ENCODE measurements at regions of chr21 and their contacts with region 1.

Region 1: DNA sequence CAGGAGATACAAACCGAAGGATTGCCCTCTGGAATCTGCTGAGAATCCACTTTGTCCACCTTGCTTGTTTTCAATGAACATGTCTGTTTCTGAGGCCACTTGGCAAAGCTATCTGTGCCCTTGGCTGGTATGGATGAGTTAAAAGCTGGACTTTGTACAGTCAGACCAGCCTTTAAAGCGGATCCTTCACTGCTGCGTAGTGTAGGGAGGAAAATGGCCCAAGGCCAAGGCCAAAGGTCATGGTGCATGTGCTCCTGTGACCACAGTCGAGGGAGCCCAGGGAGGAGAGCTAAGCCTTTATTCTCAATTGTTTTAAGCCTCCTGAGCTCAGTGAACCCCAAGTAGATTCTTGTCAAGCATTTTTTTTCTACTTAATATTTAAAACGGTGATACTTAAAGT is 37.0 kb downstream of the KCNJ15 start:
- DNase-seq: no peak
- ATAC-seq: no peak
- H3K4me3 ChIP-seq: no peak overlapping the region
- H3K4me3 Mint-ChIP-seq: no peak overlapping the region
- H3K27ac ChIP-seq: no peak overlapping the region
- H3K27ac Mint-ChIP-seq: no peak overlapping the region
- H3K4me1 ChIP-seq: peaks cover 6% of the 10 kb centered on the region
- H3K4me1 Mint-ChIP-seq: peaks cover 0 to 5% of the 10 kb centered on the region in 2 donors
- H3K27me3 ChIP-seq: no peaks in the 10 kb centered on the region
- H3K27me3 Mint-ChIP-seq: peaks cover 9 to 43% of the 10 kb centered on the region in 2 donors
- CTCF ChIP-seq: no peak

Region 2: GRCh38 chr21:38140210-38140907 is 153.4 kb before region 1 on chr21:
- intact Hi-C with region 1: no loop called
- DNase-seq: no peak
- ATAC-seq: no peak
- H3K4me3 ChIP-seq: no peak overlapping the region
- H3K4me3 Mint-ChIP-seq: no peak overlapping the region
- H3K27ac ChIP-seq: no peak overlapping the region
- H3K27ac Mint-ChIP-seq: no peak overlapping the region
- H3K4me1 ChIP-seq: no peaks in the 10 kb centered on the region
- H3K4me1 Mint-ChIP-seq: no peaks in the 10 kb centered on the region
- H3K27me3 ChIP-seq: no peaks in the 10 kb centered on the region
- H3K27me3 Mint-ChIP-seq: peaks cover 13 to 39% of the 10 kb centered on the region in 2 donors
- CTCF ChIP-seq: no peak

Region 3: DNA sequence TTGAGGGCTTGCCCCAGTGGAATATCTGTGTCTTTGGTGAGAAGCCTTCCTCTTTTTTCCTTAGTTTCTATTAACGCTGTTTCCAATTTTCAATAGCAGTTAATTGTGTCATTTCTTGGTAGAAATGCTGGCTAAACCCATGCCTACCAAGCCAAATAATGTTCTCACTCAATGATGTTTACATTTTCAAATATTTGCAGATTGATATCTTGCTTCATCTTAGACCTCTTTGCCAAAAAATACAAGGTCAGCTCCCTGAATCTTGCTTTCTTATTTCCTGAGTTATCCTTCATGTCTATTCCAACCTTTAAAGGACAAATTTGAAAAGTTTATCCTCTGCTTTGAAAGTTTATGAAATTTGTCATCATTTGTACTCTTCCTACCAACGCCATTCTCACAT is 31.9 kb before region 1 on chr21:
- intact Hi-C with region 1: loop called (anchors 1 kb)
- DNase-seq: no peak
- ATAC-seq: no peak
- H3K4me3 ChIP-seq: no peak overlapping the region
- H3K4me3 Mint-ChIP-seq: no peak overlapping the region
- H3K27ac ChIP-seq: no peak overlapping the region
- H3K27ac Mint-ChIP-seq: no peak overlapping the region
- H3K4me1 ChIP-seq: no peaks in the 10 kb centered on the region
- H3K4me1 Mint-ChIP-seq: no peaks in the 10 kb centered on the region
- H3K27me3 ChIP-seq: no peaks in the 10 kb centered on the region
- H3K27me3 Mint-ChIP-seq: peaks cover 33 to 39% of the 10 kb centered on the region in 2 donors
- CTCF ChIP-seq: no peak